Dendritic cell treated with granulocyte-macrophage colony-stimulating factor and Interleukin-4, amounts not matched to agents 40 ng/mL and 50 ng/mL, for 4 days (primary cell): ENCODE measurements at regions of chr19 and their contacts with region 1.

Region 1: GRCh38 chr19:43765109-43765876 is 10.5 kb upstream of the SMG9 start:
- H3K4me3 Mint-ChIP-seq: peak overlapping the region; percentile 18
- H3K27ac Mint-ChIP-seq: peak overlapping the region; percentile 92
- H3K4me1 Mint-ChIP-seq: peaks cover 93% of the 10 kb centered on the region
- H3K27me3 Mint-ChIP-seq: no peaks in the 10 kb centered on the region

Region 2: GRCh38 chr19:43754503-43755255 is 10.6 kb before region 1 on chr19 and contains the start of gene SMG9:
- intact Hi-C with region 1: loop called (anchors 1 kb)
- H3K4me3 Mint-ChIP-seq: peak within 1 kb of the TSS; percentile 97
- H3K27ac Mint-ChIP-seq: peak within 1 kb of the TSS; percentile 97
- H3K4me1 Mint-ChIP-seq: peaks cover 71% of the 10 kb centered on the region
- H3K27me3 Mint-ChIP-seq: no peaks in the 10 kb centered on the region